Activated CD4-positive, alpha-beta T cell treated with anti-CD3 and anti-CD28 coated beads for 36 hours (primary cell): ENCODE measurements at regions of chr12 and their contacts with region 1.

Region 1: GRCh38 chr12:50283229-50283923 is at the start of gene LIMA1:
- DNase-seq: peak; percentile 96
- ATAC-seq: peak; percentile 98
- H3K4me3 Mint-ChIP-seq: peak within 1 kb of the TSS; percentile 91
- H3K27ac Mint-ChIP-seq: peak within 1 kb of the TSS; percentile 88
- H3K4me1 Mint-ChIP-seq: peaks cover 20% of the 10 kb centered on the region
- H3K27me3 Mint-ChIP-seq: no peaks in the 10 kb centered on the region
- total RNA-seq, gene LIMA1: 69.7 to 90.4 TPM

Region 2: DNA sequence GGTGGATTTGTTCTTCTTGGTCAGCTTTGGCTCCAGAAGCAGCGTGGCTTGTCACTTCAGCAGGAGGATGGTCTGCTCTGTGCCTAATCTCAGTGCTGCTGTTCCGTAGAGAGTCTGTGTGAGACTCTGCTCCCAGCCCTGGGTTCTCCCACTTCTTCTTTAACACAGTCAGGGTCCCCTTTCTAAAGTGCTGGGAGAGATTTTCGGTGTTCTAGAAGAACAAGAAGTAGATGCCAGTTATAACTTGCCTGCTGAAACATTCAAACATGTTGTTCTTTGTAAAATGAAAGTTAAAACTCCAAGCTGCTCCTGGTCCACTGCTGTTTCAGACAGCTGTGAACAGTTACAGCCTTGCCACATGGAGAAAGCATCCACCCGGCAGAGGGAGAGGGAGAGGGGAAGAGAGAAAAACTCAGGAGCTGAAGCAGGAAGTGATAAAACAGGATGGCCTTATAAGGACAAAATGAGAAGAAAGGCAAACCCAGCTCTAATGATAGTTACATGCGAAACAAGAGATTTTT is 61.0 kb before region 1 on chr12:
- CTCF ChIA-PET with region 1: no interaction called
- POLR2A ChIA-PET with region 1: interaction called, 4 read pairs
- intact Hi-C with region 1: loop called (anchors 1 to 2 kb)
- DNase-seq: peak; percentile 48
- ATAC-seq: peak; percentile 21
- H3K4me3 Mint-ChIP-seq: no peak overlapping the region
- H3K27ac Mint-ChIP-seq: no peak overlapping the region
- H3K4me1 Mint-ChIP-seq: peaks cover 40% of the 10 kb centered on the region
- H3K27me3 Mint-ChIP-seq: no peaks in the 10 kb centered on the region